PC-9 (cell line): ENCODE measurements at regions of chr10 and their contacts with region 1.

Region 1: GRCh38 chr10:97771055-97771811 is 566 bp downstream of the SFRP5 start:
- DNase-seq: no peak
- H3K4me3 ChIP-seq: no peak overlapping the region
- H3K27ac ChIP-seq: no peak overlapping the region
- H3K4me1 ChIP-seq: no peaks in the 10 kb centered on the region
- H3K27me3 ChIP-seq: no peaks in the 10 kb centered on the region
- CTCF ChIP-seq: no peak

Region 2: DNA sequence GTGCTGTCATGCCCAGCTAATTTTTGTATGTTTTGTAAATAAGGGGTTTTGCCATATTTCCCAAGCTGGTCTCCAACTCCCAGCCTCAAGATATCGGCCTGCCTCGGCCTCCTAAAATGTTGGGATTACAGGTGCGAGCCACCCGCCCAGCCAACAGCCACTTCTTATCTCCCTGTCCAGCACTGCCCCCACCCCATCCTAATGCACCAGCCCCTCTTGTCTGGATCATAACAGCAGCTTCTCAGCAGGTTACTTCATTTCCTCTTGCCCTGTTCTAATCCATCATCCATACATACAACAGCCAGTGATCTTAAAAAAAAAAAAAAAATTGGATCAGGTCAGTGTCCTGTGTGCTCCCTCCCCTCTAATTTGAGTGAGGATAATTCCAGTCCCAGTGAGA is 423.9 kb before region 1 on chr10:
- CTCF ChIA-PET with region 1: interaction called, 13 read pairs
- POLR2A ChIA-PET with region 1: no interaction called
- intact Hi-C with region 1: no loop called
- DNase-seq: no peak
- H3K4me3 ChIP-seq: no peak overlapping the region
- H3K27ac ChIP-seq: no peak overlapping the region
- H3K4me1 ChIP-seq: no peaks in the 10 kb centered on the region
- H3K27me3 ChIP-seq: no peaks in the 10 kb centered on the region
- CTCF ChIP-seq: no peak

Region 3: GRCh38 chr10:97888641-97889262 is 117.5 kb after region 1 on chr10:
- CTCF ChIA-PET with region 1: no interaction called
- POLR2A ChIA-PET with region 1: no interaction called
- intact Hi-C with region 1: no loop called
- DNase-seq: peak; percentile 79
- H3K4me3 ChIP-seq: peak overlapping the region; percentile 42; the same call in 1 of the 2 replicates
- H3K27ac ChIP-seq: peak overlapping the region; percentile 98
- H3K4me1 ChIP-seq: peaks cover 40% of the 10 kb centered on the region
- H3K27me3 ChIP-seq: no peaks in the 10 kb centered on the region
- CTCF ChIP-seq: no peak; the same call in 1 of the 2 replicates